ENCODE measurements at regions of chr2 and their contacts with region 1.

Region 1: GRCh38 chr2:197804049-197804757 is at the start of gene PLCL1:
- DNase-seq: peak; percentile 89 to 93 (median 92)
- ATAC-seq: peak; percentile 95
- H3K4me3 ChIP-seq: peak within 1 kb of the TSS; percentile 82
- H3K27ac ChIP-seq: peak within 1 kb of the TSS; percentile 61
- H3K4me1 ChIP-seq: peaks cover 6 to 19% of the 10 kb centered on the region in 2 experiments; a peak in 4 of 5 replicates
- H3K27me3 ChIP-seq: no peaks in the 10 kb centered on the region
- CTCF ChIP-seq: peak in 1 of 3 experiments; percentile 25; a peak in 1 of 6 replicates
- EP300 ChIP-seq: no peak
- POLR2A ChIP-seq: 0 out of 2 replicates have a peak, but pooled peaks have one; percentile 23
- RAD21 ChIP-seq: peak; percentile 12 to 37; a peak in 1 of 4 replicates
- polyA plus RNA-seq, gene PLCL1: 2.0 to 3.0 TPM

Region 2: GRCh38 chr2:197159661-197160211 is 644.5 kb before region 1 on chr2:
- CTCF ChIA-PET with region 1: no interaction called
- POLR2A ChIA-PET with region 1: no interaction called
- in situ Hi-C with region 1: no loop called
- intact Hi-C with region 1: no loop called
- DNase-seq: no peak
- ATAC-seq: no peak
- H3K4me3 ChIP-seq: no peak overlapping the region
- H3K27ac ChIP-seq: no peak overlapping the region
- H3K4me1 ChIP-seq: peaks cover 0 to 7% of the 10 kb centered on the region in 2 experiments; a peak in 2 of 5 replicates
- H3K27me3 ChIP-seq: peaks cover 0 to 18% of the 10 kb centered on the region in 2 experiments; a peak in 3 of 5 replicates
- CTCF ChIP-seq: no peak
- EP300 ChIP-seq: no peak
- POLR2A ChIP-seq: no peak
- RAD21 ChIP-seq: no peak

Region 3: DNA sequence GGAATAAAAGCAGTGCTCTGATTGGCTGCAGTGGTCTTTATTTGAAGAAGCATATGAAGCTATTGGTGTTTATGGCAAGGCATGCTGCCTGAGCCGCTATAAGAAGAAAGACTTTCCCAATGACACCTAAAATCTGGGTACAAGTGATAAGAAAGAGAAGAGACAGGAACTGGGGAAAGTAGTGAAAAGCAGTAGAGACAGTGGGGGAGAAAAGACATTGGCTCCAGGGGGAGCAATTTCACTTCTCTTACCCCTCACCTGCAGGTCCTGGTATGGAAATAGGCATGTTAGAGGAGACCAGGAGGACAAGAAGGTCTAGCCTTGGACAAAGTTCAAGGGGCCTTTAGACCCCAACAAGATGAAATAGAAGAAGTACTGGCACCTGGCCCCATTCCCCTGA is 47.2 kb after region 1 on chr2:
- CTCF ChIA-PET with region 1: no interaction called
- POLR2A ChIA-PET with region 1: no interaction called
- in situ Hi-C with region 1: no loop called
- intact Hi-C with region 1: loop called (anchors 2 kb)
- DNase-seq: peak; percentile 31 to 72 (median 54)
- ATAC-seq: peak; percentile 89
- H3K4me3 ChIP-seq: no peak overlapping the region
- H3K27ac ChIP-seq: peak overlapping the region; percentile 20; the same call in 1 of the 3 replicates
- H3K4me1 ChIP-seq: peaks cover 0 to 30% of the 10 kb centered on the region in 2 experiments; a peak in 3 of 5 replicates
- H3K27me3 ChIP-seq: no peaks in the 10 kb centered on the region
- CTCF ChIP-seq: peak; percentile 43 to 64 (median 51)
- EP300 ChIP-seq: peak; percentile 40; the same call in 1 of the 2 replicates
- POLR2A ChIP-seq: no peak
- RAD21 ChIP-seq: peak; percentile 56 to 85

Region 4: GRCh38 chr2:197986977-197987376 is 182.8 kb after region 1 on chr2:
- CTCF ChIA-PET with region 1: no interaction called
- POLR2A ChIA-PET with region 1: no interaction called
- in situ Hi-C with region 1: no loop called
- intact Hi-C with region 1: loop called (anchors 5 kb)
- DNase-seq: no peak
- ATAC-seq: no peak
- H3K4me3 ChIP-seq: no peak overlapping the region
- H3K27ac ChIP-seq: no peak overlapping the region
- H3K4me1 ChIP-seq: peaks cover 0 to 15% of the 10 kb centered on the region in 2 experiments; a peak in 2 of 5 replicates
- H3K27me3 ChIP-seq: no peaks in the 10 kb centered on the region
- CTCF ChIP-seq: no peak
- EP300 ChIP-seq: no peak
- POLR2A ChIP-seq: no peak
- RAD21 ChIP-seq: no peak

Region 5: DNA sequence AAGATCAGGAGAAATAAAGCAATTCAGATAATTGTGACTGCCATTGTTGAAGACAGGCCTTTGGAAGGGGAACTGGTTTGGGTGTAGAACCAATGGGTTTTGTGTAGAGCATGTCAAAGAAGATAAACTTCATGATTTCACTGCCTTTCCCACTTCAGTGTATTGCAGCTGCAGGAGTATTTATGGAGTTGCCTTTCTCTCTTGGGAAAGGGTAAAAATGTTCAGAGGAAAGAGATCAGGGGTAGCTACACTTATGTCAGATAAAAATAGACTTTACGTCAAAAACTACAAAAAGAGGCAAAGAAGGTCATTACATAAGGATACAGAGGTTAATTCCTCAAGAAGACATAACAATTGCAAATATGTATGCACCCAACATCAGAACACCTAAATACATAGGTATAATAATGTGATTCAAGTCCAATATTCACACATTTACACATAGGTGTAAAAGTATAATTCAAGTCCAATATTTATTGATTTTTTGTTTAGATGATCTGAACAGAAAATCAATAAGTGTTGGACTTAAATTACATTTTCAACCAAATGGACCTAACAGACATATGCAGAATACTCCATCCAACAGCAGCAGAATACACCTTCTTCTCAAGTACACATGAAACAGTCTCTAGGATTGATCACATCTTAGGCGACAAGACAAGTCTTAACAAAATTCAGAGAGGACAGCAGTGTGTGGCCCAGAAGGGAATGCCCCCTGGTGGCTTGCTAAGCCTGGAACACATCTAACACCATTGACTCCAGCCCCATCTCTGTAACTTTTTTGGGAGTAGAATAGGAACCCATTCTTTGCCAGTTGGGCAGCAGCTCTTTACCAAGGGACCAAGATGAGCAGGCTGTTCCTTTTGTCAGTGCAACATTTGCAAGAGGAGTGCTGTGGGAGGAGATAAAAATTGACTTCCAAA is 249.8 kb after region 1 on chr2:
- CTCF ChIA-PET with region 1: no interaction called
- POLR2A ChIA-PET with region 1: no interaction called
- in situ Hi-C with region 1: no loop called
- intact Hi-C with region 1: loop called (anchors 1 kb)
- DNase-seq: peak; percentile 21 to 72 (median 48)
- ATAC-seq: peak; percentile 96
- H3K4me3 ChIP-seq: no peak overlapping the region
- H3K27ac ChIP-seq: no peak overlapping the region
- H3K4me1 ChIP-seq: peaks cover 3 to 8% of the 10 kb centered on the region in 2 experiments; a peak in 4 of 5 replicates
- H3K27me3 ChIP-seq: no peaks in the 10 kb centered on the region
- CTCF ChIP-seq: peak; percentile 59 to 66 (median 61)
- EP300 ChIP-seq: no peak
- POLR2A ChIP-seq: no peak
- RAD21 ChIP-seq: peak; percentile 62 to 76

Region 6: GRCh38 chr2:198296665-198297308 is 492.6 kb after region 1 on chr2:
- CTCF ChIA-PET with region 1: interaction called, 10 read pairs
- POLR2A ChIA-PET with region 1: interaction called, 4 read pairs
- in situ Hi-C with region 1: loop called (anchors 10 kb)
- intact Hi-C with region 1: loop called (anchors 1 kb)
- DNase-seq: peak; percentile 53 to 76 (median 60)
- ATAC-seq: peak; percentile 96
- H3K4me3 ChIP-seq: no peak overlapping the region
- H3K27ac ChIP-seq: no peak overlapping the region
- H3K4me1 ChIP-seq: peaks cover 0 to 3% of the 10 kb centered on the region in 2 experiments; a peak in 2 of 5 replicates
- H3K27me3 ChIP-seq: peaks cover 0 to 12% of the 10 kb centered on the region in 2 experiments; a peak in 2 of 5 replicates
- CTCF ChIP-seq: peak; percentile 63 to 70 (median 64)
- EP300 ChIP-seq: no peak
- POLR2A ChIP-seq: no peak
- RAD21 ChIP-seq: peak; percentile 80 to 83

Region 7: DNA sequence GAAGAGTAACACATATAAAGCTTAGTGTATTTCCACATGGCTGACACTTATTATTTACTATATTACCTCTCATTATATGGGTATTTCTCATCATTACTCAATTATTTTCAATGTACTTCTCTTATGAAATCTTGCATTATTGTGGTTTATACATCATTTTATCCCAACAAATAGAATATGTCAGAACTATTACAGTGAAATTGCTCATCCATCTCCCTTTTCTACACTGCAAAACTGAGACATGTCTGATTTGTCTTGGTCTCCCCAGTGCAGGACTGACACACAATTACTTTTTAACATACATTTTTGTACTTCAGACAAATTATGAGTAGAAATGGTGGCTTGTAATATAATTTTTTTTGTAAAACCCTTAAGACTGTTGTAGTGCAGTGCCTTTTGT is 601.1 kb after region 1 on chr2:
- CTCF ChIA-PET with region 1: no interaction called
- POLR2A ChIA-PET with region 1: no interaction called
- in situ Hi-C with region 1: no loop called
- intact Hi-C with region 1: no loop called
- DNase-seq: no peak
- ATAC-seq: no peak
- H3K4me3 ChIP-seq: no peak overlapping the region
- H3K27ac ChIP-seq: no peak overlapping the region
- H3K4me1 ChIP-seq: no peaks in the 10 kb centered on the region
- H3K27me3 ChIP-seq: no peaks in the 10 kb centered on the region
- CTCF ChIP-seq: no peak
- EP300 ChIP-seq: no peak
- POLR2A ChIP-seq: no peak
- RAD21 ChIP-seq: no peak

Measured in K562 (cell line).